ENCODE measurements at regions of chr11 and their contacts with region 1.

Region 1: DNA sequence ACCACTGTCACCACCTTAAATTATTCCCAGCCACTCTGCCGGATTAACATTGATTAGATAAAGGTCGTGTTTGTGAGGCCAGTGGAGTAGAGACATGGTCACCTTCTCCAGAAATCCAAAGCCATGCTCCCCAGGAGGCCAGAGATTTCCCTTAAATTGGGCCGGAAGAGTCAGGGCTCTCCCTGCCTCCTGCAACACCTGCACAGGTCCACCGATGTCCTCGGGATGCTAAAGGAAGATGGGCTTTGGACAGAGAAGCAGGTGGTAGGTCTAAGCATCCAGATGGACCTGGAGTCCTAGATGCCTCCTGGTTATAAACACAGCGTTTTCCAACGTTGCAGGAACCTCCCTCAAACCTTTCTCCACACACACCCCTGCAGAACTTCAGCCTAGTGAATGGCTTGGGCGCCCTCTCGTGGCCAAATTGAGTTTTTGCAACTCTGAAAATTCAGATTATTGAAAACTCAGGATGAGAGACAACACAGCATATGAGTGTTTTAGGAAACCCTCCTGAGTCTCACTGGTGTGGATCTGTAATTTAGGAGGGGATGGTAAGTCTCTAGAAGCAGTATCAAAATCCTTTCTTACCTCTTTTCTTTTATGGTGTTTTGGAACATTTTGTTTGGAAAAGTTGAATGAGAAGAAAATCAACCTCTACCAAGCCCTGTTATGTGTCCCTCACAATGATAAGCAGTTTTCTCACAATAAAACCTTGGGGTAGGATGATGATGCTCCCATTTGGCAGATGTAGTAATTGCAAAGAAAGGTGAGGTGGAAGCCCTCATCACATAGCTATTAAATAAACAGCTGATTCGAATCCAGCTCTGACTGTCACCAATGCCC is 109.6 kb downstream of the RRAS2 start:
- DNase-seq: peak; percentile 56 to 69 (median 63)
- H3K4me3 ChIP-seq: peak overlapping the region in 1 of 2 donors; percentile 42
- H3K4me3 Mint-ChIP-seq: peak overlapping the region; percentile 68 to 87 (median 72)
- H3K27ac ChIP-seq: no peak overlapping the region
- H3K27ac Mint-ChIP-seq: peak overlapping the region in 5 of 7 donors; percentile 6 to 50 (median 38)
- H3K4me1 ChIP-seq: peaks cover 18% of the 10 kb centered on the region
- H3K4me1 Mint-ChIP-seq: peaks cover 21 to 28% (median 24%) of the 10 kb centered on the region in 4 donors
- H3K27me3 ChIP-seq: no peaks in the 10 kb centered on the region
- H3K27me3 Mint-ChIP-seq: no peaks in the 10 kb centered on the region

Region 2: DNA sequence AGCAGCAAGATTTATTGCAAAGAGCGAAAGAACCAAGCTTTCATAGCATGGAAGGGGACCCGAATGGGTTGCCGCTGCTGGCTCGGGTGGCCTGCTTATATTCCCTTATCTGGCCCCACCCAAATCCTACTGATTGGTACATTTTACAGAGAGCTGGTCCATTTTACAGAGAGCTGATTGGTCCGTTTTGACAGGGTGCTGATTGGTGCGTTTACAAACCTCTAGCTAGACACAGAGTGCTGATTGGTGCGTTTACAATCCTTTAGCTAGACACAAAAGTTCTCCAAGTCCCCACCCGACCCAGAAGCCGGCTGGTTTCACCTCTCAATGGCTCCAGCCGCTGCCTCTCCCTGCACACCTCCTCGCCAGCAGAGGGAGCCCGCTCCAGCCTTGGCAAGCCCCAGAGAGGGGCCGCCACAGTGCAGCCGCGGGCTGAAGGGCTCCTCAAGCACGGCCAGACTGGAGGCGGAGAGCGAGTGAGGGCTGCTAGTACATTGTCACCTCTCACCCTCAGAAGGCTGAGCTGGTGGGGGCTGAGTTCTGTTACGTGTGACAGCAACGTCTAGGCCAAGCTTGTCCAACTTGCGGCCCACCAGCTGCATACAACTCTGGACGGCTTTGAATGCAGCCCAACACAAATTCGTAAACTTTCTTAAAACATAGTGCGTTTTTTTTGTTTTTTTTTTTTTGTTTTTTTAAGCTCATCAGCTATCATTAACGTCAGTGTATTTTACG is 762.2 kb before region 1 on chr11:
- CTCF ChIA-PET with region 1: interaction called, 10 read pairs
- POLR2A ChIA-PET with region 1: no interaction called
- intact Hi-C with region 1: no loop called
- DNase-seq: peak; percentile 54 to 72 (median 60)
- H3K4me3 ChIP-seq: peak overlapping the region in 1 of 2 donors; percentile 23
- H3K4me3 Mint-ChIP-seq: peak overlapping the region; percentile 73 to 90 (median 83)
- H3K27ac ChIP-seq: peak overlapping the region; percentile 21
- H3K27ac Mint-ChIP-seq: peak overlapping the region in 4 of 7 donors; percentile 3 to 92 (median 48)
- H3K4me1 ChIP-seq: no peaks in the 10 kb centered on the region
- H3K4me1 Mint-ChIP-seq: peaks cover 6 to 11% (median 6%) of the 10 kb centered on the region in 4 donors
- H3K27me3 ChIP-seq: no peaks in the 10 kb centered on the region
- H3K27me3 Mint-ChIP-seq: peaks cover 5 to 11% of the 10 kb centered on the region in 2 donors

Region 3: DNA sequence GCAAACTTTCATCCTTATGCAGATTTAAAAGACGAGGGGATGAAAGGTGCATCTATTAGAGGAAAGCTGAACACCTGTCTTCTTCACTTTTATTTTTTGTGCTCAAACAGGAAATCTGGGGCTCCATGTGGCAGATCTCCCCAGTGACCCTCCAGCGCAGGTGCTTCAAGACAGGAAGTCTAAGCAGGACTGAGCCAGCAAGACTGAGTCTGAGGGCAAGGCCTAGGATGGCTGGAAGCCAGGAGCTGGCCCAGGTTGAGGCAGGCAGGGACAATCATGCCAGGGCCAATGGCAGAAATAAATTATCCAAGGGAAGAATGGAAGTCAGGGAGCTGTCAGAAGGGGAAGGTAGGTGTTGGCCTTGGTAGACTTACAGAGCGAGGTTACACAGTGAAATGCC is 387.9 kb before region 1 on chr11:
- CTCF ChIA-PET with region 1: interaction called, 7 read pairs
- POLR2A ChIA-PET with region 1: no interaction called
- intact Hi-C with region 1: loop called (anchors 1 kb)
- DNase-seq: peak in 3 of 5 donors; percentile 16 to 25 (median 24)
- H3K4me3 ChIP-seq: no peak overlapping the region
- H3K4me3 Mint-ChIP-seq: peak overlapping the region in 7 of 8 donors; percentile 2 to 64 (median 33)
- H3K27ac ChIP-seq: no peak overlapping the region
- H3K27ac Mint-ChIP-seq: peak overlapping the region; percentile 37 to 90 (median 83)
- H3K4me1 ChIP-seq: peaks cover 23% of the 10 kb centered on the region
- H3K4me1 Mint-ChIP-seq: peaks cover 18 to 35% (median 31%) of the 10 kb centered on the region in 4 donors
- H3K27me3 ChIP-seq: no peaks in the 10 kb centered on the region
- H3K27me3 Mint-ChIP-seq: no peaks in the 10 kb centered on the region

Region 4: GRCh38 chr11:14148653-14149273 is 100.6 kb before region 1 on chr11:
- CTCF ChIA-PET with region 1: interaction called, 15 read pairs
- POLR2A ChIA-PET with region 1: no interaction called
- intact Hi-C with region 1: loop called (anchors 2 kb)
- DNase-seq: peak in 4 of 5 donors; percentile 39 to 51 (median 42)
- H3K4me3 ChIP-seq: no peak overlapping the region
- H3K4me3 Mint-ChIP-seq: no peak overlapping the region
- H3K27ac ChIP-seq: no peak overlapping the region
- H3K27ac Mint-ChIP-seq: peak overlapping the region in 1 of 7 donors; percentile 10
- H3K4me1 ChIP-seq: no peaks in the 10 kb centered on the region
- H3K4me1 Mint-ChIP-seq: peaks cover 0 to 4% (median 1%) of the 10 kb centered on the region in 4 donors
- H3K27me3 ChIP-seq: no peaks in the 10 kb centered on the region
- H3K27me3 Mint-ChIP-seq: no peaks in the 10 kb centered on the region

Region 5: GRCh38 chr11:14223636-14224288 is 25.6 kb before region 1 on chr11:
- CTCF ChIA-PET with region 1: no interaction called
- POLR2A ChIA-PET with region 1: no interaction called
- intact Hi-C with region 1: no loop called
- DNase-seq: no peak
- H3K4me3 ChIP-seq: no peak overlapping the region
- H3K4me3 Mint-ChIP-seq: no peak overlapping the region
- H3K27ac ChIP-seq: no peak overlapping the region
- H3K27ac Mint-ChIP-seq: peak overlapping the region in 1 of 7 donors; percentile 49
- H3K4me1 ChIP-seq: peaks cover 4% of the 10 kb centered on the region
- H3K4me1 Mint-ChIP-seq: peaks cover 0 to 3% (median 1%) of the 10 kb centered on the region in 4 donors
- H3K27me3 ChIP-seq: no peaks in the 10 kb centered on the region
- H3K27me3 Mint-ChIP-seq: no peaks in the 10 kb centered on the region

Region 6: DNA sequence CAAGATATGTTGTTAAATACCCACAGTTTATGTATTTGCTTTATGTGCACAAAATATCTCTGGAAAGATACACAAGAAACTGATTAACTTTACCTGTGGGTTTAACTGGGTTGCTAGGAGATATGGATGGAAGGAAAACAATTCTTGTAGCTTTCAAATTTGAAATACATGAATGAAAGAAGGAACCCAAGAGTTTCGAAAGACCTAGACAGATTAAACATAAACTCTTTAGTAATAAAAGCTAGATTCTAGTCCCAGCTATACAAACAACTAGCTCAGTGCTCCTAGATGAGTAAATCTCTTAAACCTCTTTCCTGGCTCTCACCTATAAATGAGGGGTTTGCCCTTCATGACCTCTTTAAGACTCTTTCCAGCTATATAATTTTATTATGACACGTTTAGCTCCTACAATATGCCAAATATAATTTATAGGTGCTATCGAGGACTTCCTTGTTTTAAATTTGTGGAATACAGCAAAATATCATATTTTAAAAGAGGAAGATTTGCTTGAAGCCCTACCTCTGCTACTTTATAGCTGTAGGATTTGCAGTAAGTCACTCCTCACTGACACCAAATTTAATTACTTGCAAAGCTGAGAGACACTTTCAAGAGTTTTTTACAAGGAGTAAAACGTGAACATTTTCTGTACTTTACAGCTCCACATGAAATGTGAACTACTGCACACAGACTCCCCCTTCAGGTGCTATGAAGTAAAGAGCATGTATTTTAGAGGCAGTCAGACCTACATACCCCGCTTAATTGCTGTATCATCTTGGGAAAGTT is 59.0 kb after region 1 on chr11:
- CTCF ChIA-PET with region 1: interaction called, 3 read pairs
- POLR2A ChIA-PET with region 1: no interaction called
- intact Hi-C with region 1: loop called (anchors 2 kb)
- DNase-seq: peak in 4 of 5 donors; percentile 20 to 29 (median 24)
- H3K4me3 ChIP-seq: no peak overlapping the region
- H3K4me3 Mint-ChIP-seq: no peak overlapping the region
- H3K27ac ChIP-seq: no peak overlapping the region
- H3K27ac Mint-ChIP-seq: no peak overlapping the region
- H3K4me1 ChIP-seq: peaks cover 23% of the 10 kb centered on the region
- H3K4me1 Mint-ChIP-seq: peaks cover 7 to 12% (median 10%) of the 10 kb centered on the region in 4 donors
- H3K27me3 ChIP-seq: no peaks in the 10 kb centered on the region
- H3K27me3 Mint-ChIP-seq: no peaks in the 10 kb centered on the region